Posterior cingulate gyrus (tissue), 11 donors: ENCODE measurements at regions of chr1 and their contacts with region 1.

Region 1: DNA sequence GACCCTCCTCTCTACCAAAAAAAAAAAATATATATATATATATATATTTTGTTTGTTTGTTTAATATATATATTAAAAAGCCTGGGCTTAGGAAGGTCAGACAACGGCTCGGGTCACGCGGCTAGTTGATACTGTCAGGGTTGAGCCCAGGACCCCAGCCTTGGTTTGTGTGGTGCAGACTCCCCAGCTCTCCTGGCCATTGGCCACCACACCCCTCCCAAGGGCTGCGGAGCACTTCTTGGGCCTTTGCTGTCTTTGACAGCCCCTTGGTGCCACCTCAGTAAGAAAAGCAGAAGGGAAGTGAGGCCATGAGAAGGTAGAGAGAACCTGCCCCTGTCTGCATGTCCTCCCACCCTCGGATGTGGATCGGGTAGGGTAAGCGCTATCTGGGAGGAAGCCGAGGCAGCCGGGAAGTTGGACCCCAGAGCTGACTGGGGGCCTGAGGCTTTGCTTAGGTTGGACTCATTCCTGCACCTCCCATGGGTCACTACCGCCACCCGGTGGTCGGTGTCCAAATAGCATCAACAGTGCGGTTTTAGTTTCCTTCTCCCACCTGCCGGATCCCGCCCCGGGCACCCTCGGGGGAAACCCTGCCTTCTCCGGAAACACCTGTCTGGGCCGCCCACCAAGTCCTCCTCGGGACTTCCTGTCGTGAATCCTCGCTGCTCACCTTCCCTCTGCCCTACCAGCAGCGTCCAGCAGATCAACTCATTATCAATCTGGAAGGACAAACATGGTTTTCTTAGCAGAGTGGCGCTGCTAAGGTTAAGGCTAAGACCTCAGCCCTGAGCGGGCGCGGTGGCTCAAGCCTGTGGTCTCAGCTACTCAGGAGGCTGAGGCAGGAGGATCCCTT is 29.8 kb upstream of the GNPAT start:
- DNase-seq: peak; percentile 65 to 97 (median 88)

Region 2: DNA sequence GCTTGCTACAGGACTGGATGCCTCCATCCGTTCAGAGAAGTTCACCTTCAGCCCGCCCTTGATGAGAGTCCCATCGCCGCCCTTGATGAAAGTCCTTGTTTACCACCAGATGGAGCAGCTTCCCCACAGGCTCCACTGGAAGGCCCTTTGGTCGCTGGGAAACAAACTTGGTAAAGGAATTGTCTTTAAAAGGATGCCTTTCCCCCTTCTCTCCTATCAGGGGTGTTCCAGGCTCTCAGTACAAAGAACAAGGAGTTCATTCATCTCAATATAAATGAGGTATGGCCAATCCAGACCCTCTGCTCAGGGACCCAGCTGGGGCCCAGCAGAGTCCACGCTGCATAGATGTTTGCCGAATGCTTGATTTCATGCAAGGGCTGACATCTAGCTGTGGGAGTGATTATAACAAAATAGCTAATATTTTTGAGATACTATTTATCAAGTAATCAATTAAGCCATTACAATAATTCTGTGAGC is 413.3 kb before region 1 on chr1:
- intact Hi-C with region 1: loop called (anchors 5 kb)
- DNase-seq: peak; percentile 49 to 95 (median 73)

Region 3: GRCh38 chr1:230917284-230918135 is 293.7 kb before region 1 on chr1:
- intact Hi-C with region 1: loop called (anchors 5 kb)
- DNase-seq: peak in 8 of 10 donors; percentile 66 to 94 (median 76)

Region 4: DNA sequence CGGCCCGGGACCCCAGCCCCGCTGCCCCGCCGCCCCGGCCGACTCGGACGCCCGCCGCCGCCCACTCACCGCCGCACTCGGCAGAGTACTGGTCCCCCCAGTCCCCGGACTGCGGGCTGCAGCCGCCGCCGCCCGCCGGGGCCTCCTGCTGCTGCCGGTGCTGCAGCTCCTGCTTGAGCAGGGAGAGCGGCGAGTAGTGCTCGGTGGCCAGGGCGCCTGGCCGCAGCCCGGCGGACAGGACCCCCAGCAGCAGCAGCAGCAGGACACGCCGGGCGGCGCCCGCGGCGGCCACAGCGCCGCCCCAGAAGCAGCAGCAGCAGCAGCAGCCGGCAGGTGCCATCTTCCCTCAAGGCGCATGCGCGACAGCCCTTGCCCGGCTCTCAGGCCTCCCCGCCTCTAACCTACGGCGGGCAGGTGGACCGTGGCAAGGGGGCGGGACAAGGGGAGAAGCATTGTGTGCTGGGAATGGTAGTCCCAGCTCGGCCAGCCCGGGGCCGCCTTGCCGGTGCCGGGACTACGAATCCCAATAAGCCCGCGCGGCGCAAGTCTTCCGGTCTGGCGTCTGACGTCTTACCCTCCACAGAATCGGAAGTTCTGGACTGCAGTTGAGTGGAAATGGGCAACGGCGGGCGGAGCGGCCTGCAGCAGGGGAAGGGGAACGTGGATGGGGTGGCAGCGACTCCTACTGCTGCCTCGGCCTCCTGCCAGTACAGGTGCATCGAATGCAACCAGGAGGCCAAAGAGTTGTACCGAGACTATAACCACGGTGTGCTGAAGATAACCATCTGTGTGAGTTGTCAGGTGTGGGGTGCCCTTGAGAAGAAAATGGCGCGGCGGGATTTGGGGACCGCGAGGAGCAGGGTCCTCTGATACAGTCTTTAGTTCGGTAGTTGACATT is 232.5 kb before region 1 on chr1 and contains the starts of genes ARV1 and TTC13:
- intact Hi-C with region 1: loop called (anchors 10 kb)
- DNase-seq: peak; percentile 93 to 100 (median 99)

Region 5: DNA sequence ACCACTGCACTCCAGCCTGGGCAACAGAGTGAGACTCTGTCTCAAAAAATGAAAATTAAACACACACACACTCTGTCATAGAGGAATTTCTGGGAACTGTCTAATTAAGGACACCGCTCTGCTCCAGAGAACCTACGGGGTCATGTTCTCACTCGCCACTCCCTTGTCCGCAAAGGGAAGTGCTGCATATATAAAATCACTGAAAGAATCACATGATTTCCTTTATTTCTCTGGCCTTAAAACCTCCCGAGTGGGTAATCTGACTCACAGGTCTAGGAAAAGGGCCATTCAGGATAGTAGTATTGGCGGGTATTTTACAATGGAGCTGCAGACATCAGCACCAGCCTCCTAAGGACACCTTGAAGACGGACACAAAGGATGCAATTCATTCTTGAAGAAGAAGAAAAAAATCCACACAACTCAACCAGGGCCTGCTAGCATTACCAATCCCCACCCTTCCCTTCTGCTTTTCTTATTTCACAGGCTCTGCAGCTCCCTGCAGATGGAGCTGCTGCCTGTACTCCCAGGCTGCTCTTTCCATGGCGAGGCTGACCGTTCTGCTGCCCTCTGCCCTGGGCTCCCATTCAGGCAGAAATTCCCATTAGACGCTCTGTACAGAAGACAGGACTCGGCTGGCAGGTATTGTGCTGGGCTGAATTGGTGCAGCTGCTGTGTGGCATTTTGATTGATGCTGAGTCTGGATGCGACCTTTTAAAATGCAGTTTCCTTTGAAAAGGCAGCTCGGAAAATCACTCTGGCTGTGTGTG is 117.9 kb before region 1 on chr1:
- intact Hi-C with region 1: loop called (anchors 1 kb)
- DNase-seq: peak in 6 of 10 donors; percentile 8 to 93 (median 34)